ENCODE measurements at regions of chr11 and their contacts with region 1.

Region 1: GRCh38 chr11:130139401-130139800 is 20.2 kb upstream of the ST14 start:
- DNase-seq: no peak
- ATAC-seq: no peak
- H3K4me3 ChIP-seq: no peak overlapping the region
- H3K27ac ChIP-seq: no peak overlapping the region
- H3K4me1 ChIP-seq: no peaks in the 10 kb centered on the region
- H3K27me3 ChIP-seq: no peaks in the 10 kb centered on the region
- CTCF ChIP-seq: no peak
- POLR2A ChIP-seq: no peak

Region 2: GRCh38 chr11:129922674-129923073 is 216.7 kb before region 1 on chr11:
- in situ Hi-C with region 1: loop called (anchors 5 kb)
- intact Hi-C with region 1: no loop called
- DNase-seq: no peak
- ATAC-seq: no peak
- H3K4me3 ChIP-seq: no peak overlapping the region
- H3K27ac ChIP-seq: no peak overlapping the region
- H3K4me1 ChIP-seq: peaks cover 0 to 3% of the 10 kb centered on the region in 2 donors
- H3K27me3 ChIP-seq: no peaks in the 10 kb centered on the region
- CTCF ChIP-seq: no peak
- POLR2A ChIP-seq: no peak

Region 3: DNA sequence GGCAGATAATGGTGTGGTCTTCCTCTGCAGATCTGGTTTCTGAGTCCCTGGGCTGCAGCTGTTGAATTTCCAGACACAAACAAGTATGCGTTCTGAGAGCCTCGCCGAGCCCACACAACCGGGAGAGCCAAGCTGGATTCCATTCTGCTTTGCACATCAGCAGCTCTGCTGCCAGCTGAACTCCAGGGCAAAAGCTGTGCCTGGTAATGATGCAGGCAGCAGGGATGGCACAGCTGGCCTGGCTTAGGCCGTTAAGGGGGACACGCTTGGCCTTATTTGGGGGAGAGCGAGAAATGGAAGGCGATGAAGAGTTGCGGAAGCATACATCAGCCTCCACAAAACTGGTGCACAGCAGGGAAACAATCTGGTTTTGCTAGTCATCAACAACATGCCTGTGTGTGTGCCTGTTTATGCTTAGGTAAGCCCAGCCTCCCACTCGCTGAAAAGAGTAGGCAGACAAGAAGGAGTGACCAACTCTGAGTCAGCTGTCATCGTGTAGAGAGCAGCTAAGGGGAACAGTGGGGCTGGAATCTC is 263.9 kb after region 1 on chr11:
- in situ Hi-C with region 1: no loop called
- intact Hi-C with region 1: no loop called
- DNase-seq: no peak
- ATAC-seq: peak; percentile 23 to 61
- H3K4me3 ChIP-seq: no peak overlapping the region
- H3K27ac ChIP-seq: no peak overlapping the region
- H3K4me1 ChIP-seq: peaks cover 22 to 31% of the 10 kb centered on the region in 2 donors
- H3K27me3 ChIP-seq: no peaks in the 10 kb centered on the region
- CTCF ChIP-seq: no peak
- POLR2A ChIP-seq: no peak

Measured in gastrocnemius medialis (tissue), 4 donors.